Cardiac septum (tissue), 1 donor: ENCODE measurements at regions of chr17 and their contacts with region 1.

Region 1: DNA sequence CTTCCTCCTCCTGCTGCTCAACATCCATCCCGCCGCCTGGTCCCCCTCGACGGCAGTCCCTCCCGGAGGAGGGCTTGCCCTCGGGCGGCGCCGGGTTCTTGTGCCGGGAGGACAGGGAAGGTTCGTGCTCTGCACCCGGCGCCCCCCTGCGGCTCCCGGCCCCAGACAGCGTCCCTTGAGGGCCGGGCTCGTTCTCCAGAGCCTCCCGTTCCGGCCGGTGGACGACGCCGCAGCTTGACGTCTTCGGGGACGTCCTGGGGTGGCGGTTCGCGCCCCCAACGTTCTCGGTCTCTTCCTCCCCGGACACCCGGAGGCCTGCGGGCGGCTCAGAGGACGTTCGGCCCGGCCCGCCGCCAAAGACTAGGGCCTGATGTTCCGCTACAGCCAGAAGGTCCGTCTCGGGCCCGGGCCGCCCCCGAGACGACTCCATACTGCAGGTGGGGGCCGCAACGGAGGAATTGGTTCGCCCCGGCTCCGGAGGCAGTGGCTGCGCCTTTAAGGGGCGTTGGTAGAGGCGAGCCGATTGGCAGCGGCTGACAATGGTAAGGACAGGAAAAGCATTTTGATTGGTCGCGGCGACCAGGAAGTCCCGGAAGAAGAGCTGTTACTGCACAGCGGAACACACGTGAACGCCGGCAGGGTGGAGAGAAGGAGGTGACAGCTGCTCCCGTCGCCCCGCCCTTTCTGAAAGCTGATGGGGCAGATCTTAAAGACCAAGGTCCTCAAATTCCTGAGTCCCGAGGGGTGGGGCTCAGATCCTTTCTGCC is at the start of gene BORCS6:
- DNase-seq: peak; percentile 100
- total RNA-seq, gene BORCS6: 6.8 TPM

Region 2: GRCh38 chr17:8118769-8119580 is 70.9 kb before region 1 on chr17:
- intact Hi-C with region 1: loop called (anchors 2 kb)
- DNase-seq: peak; percentile 93

Region 3: GRCh38 chr17:8138672-8139371 is 51.1 kb before region 1 on chr17:
- intact Hi-C with region 1: loop called (anchors 5 kb)
- DNase-seq: peak; percentile 96

Region 4: DNA sequence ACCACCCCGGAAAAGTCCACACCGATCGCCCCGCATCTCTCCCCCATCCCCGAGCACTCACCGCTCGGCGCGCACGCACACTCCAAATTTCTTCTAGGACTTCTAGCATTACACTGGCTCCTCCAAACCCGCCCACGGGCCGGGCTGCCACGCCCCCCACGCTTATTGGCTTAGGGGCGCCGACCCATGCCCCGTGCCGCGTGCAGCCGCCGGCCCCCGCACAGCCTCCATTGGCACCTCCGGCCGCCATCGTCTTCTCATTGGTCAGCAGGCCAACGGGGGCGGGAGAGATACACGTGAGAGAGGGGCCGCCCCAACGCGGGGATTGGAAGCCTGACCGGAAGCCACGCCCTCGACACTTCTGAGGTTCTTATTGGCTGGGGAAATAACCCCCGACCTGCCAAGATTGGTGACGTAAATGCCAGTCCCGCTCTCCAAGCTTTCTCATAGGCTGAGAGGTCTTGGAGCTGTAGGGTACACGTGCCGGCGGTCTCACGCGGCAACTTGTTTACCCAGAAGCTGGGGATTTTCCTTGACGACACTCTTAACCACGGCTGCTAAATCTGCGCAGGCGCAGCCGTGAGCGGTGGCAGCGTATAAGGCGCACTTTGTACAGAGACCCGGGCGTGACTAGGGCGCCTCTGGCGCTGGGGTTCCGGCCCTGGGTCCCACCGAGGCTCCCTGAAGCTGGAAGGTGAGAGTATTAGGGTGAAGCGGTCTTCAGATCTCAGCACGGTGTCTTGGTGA is 33.5 kb before region 1 on chr17:
- intact Hi-C with region 1: loop called (anchors 2 kb)
- DNase-seq: peak; percentile 100

Region 5: DNA sequence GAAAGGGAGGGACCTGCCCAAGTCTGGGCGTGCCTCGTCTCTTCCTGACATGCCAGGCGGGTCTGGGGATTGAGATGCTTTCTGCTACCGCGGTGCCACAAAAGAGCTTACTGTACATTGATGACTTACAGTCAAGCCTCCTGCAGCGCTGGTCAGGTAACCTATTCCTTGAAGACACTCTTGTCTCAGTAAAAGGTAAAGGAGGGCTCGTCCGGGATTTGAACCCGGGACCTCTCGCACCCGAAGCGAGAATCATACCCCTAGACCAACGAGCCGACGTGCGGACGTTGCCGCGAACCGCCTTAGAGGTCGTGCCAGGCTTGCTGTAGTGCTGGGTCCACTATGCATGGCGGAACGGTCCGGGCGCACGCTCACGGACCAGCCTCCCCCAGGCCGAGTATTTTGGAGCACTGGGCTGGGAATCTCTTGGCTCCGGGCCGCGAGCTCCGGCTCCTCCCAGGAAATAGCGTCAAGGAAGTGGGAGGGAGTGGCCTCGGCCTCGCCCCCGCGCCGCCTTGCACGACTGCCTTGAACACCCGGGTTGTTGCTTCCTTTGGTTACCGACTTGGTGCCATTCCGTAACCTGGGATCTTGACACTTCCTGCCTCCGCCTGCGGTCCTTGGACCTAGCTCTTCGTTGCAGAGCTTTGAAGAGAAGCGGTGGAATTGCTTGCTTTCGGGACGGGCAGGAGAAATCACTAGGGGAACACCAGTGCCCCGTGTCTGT is 32.9 kb after region 1 on chr17:
- intact Hi-C with region 1: loop called (anchors 1 kb)
- DNase-seq: peak; percentile 97

Region 6: DNA sequence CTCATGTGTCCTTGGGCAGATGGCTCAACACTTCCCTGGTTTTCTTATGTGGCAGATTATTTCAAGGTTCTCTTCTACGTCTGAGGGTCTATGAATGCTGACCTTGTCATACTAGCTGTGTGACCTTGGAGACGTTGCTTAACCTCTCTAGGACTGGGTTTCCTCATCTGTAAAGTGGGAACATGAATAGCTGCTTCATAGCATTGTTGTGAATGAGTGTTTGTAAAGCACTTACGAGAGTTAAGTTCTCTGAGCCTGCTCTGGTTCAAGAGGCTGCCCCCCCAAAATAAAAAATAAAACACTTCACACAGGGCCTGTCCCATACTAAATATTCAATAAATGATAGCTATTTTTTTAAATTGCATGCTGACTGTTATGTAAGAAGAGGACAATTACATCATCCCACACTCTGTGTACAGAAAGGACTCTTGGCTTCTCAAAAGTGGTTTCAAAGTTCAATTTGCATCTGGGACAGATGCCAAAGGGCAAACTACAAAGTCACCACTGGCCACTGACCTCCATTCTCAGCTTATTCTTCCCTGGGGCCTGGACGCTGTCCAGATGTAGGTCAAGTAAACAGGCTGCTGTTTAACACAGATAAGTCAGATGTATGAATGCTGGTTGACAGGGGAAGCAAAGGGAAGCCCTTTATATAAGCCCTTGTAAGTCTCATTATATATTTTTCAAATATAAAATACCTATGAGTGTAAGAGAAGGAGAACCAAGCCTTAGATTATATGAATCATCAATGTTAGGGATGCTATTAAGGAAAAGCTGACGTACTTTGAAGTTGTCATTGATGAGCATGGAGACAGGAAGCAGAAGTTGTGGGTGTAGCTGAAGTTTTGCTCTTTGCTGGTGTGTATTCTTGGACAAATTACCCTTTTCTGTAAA is 230.4 kb after region 1 on chr17:
- intact Hi-C with region 1: no loop called
- DNase-seq: peak; percentile 82